ENCODE measurements at regions of chr6 and their contacts with region 1.

Region 1: GRCh38 chr6:35044145-35044745 is 96.9 kb downstream of the TCP11 start:
- DNase-seq: no peak
- H3K4me3 ChIP-seq: no peak overlapping the region
- H3K27ac ChIP-seq: peak overlapping the region; percentile 90
- H3K4me1 ChIP-seq: peaks cover 67% of the 10 kb centered on the region
- H3K27me3 ChIP-seq: no peaks in the 10 kb centered on the region
- CTCF ChIP-seq: no peak
- POLR2A ChIP-seq: no peak

Region 2: GRCh38 chr6:34964564-34964963 is 79.7 kb before region 1 on chr6:
- CTCF ChIA-PET with region 1: no interaction called
- POLR2A ChIA-PET with region 1: no interaction called
- dilution Hi-C with region 1: no loop called
- intact Hi-C with region 1: no loop called
- DNase-seq: no peak
- H3K4me3 ChIP-seq: no peak overlapping the region
- H3K27ac ChIP-seq: no peak overlapping the region
- H3K4me1 ChIP-seq: no peaks in the 10 kb centered on the region
- H3K27me3 ChIP-seq: no peaks in the 10 kb centered on the region
- CTCF ChIP-seq: no peak
- POLR2A ChIP-seq: no peak

Region 3: DNA sequence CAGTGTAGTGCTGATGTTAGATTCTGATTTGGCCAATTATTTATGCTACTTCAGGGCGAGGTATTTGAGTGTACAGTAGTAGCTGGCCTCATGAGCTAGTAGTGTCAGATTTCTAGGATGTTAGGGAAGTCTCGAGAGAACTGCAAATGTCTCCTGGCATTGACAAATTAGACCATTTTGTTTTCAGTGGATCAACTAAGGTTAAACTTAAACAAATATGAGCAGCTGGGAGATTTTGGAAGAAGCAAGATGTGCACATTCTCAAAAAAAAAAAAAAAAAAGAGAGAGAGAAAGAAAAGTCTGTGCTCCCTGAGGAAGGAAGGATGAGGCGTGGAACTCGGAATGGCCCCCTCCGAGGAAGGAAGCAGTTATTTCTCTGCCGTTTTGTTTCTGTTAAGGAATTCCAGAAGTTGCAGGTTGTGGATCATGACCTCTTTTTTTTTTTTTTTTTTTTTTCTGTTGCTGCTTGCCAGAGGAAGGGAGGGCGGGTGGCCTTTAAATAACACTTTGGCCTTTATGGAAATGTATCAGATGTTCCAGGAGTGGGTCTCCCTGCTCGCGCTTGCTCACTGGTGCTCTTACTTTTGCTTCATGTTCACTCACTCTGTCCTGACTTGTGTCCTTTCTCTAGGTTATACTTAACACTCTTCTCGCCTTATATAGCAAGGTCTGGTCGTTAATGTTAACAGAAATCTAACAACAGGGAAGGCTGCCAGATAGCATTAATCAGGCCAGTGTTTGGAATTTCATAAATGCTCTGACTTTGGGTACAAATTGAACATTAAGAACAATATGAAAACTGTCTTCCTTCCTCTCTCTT is 27.5 kb before region 1 on chr6:
- CTCF ChIA-PET with region 1: interaction called, 12 read pairs
- POLR2A ChIA-PET with region 1: interaction called, 3 read pairs
- dilution Hi-C with region 1: no loop called
- intact Hi-C with region 1: loop called (anchors 1 kb)
- DNase-seq: peak; percentile 92
- H3K4me3 ChIP-seq: peak overlapping the region in 2 of 3 experiments; percentile 33 to 36
- H3K27ac ChIP-seq: peak overlapping the region; percentile 84
- H3K4me1 ChIP-seq: peaks cover 61% of the 10 kb centered on the region
- H3K27me3 ChIP-seq: no peaks in the 10 kb centered on the region
- CTCF ChIP-seq: no peak
- POLR2A ChIP-seq: peak; percentile 74

Region 4: GRCh38 chr6:35024551-35025054 is 19.6 kb before region 1 on chr6:
- CTCF ChIA-PET with region 1: interaction called, 11 read pairs
- POLR2A ChIA-PET with region 1: interaction called, 4 read pairs
- dilution Hi-C with region 1: no loop called
- intact Hi-C with region 1: loop called (anchors 1 kb)
- DNase-seq: peak; percentile 92
- H3K4me3 ChIP-seq: no peak overlapping the region
- H3K27ac ChIP-seq: peak overlapping the region; percentile 69
- H3K4me1 ChIP-seq: peaks cover 43% of the 10 kb centered on the region
- H3K27me3 ChIP-seq: no peaks in the 10 kb centered on the region
- CTCF ChIP-seq: no peak
- POLR2A ChIP-seq: peak; percentile 17

Region 5: GRCh38 chr6:35108309-35108885 is 64.2 kb after region 1 on chr6:
- CTCF ChIA-PET with region 1: no interaction called
- POLR2A ChIA-PET with region 1: no interaction called
- dilution Hi-C with region 1: no loop called
- intact Hi-C with region 1: no loop called
- DNase-seq: no peak
- H3K4me3 ChIP-seq: no peak overlapping the region
- H3K27ac ChIP-seq: no peak overlapping the region
- H3K4me1 ChIP-seq: no peaks in the 10 kb centered on the region
- H3K27me3 ChIP-seq: peaks cover 0 to 2% of the 10 kb centered on the region in 2 experiments
- CTCF ChIP-seq: no peak
- POLR2A ChIP-seq: no peak